ENCODE measurements at regions of chr5 and their contacts with region 1.

Region 1: DNA sequence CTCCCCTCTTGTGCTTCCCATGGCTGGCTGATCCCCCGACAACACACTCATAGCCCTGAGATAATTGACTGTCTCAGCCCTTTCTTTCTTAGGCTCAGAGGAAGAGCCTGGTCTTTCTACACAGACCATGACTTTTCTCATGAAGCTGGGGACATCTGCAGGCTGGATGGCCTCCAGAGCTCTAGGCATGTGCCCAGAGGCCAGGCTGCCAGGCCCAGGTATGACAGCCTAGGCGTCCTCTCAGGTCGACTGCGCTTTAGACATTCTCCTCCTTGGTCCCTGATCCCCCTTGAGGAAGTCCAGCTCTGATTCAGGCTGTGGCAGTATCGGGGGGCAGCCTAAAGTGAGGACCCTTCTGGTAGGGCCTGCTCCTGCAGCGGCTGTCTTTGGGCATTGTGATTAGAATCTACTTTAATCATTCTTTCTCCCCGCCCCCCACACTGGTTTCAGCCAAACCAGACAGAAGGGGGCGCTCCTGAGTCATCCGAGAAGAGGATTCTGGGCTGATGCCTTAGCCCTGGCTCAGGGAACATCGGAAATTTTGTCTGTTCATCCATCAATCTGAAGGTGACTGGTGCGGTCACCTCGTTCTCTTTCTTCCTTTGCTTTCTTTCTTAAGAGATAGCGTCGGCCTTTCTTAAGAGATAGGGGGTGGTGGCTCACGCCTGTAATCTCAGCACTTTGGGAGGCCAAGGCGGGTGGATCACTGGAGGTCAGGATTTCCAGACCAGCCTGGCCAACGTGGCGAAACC is 66.5 kb upstream of the HSPA9 start:
- DNase-seq: peak; percentile 88
- ATAC-seq: peak; percentile 91
- H3K4me3 Mint-ChIP-seq: no peak overlapping the region
- H3K27ac Mint-ChIP-seq: no peak overlapping the region
- H3K4me1 Mint-ChIP-seq: no peaks in the 10 kb centered on the region
- H3K27me3 Mint-ChIP-seq: peaks cover 58% of the 10 kb centered on the region
- CTCF ChIP-seq: peak; percentile 85

Region 2: DNA sequence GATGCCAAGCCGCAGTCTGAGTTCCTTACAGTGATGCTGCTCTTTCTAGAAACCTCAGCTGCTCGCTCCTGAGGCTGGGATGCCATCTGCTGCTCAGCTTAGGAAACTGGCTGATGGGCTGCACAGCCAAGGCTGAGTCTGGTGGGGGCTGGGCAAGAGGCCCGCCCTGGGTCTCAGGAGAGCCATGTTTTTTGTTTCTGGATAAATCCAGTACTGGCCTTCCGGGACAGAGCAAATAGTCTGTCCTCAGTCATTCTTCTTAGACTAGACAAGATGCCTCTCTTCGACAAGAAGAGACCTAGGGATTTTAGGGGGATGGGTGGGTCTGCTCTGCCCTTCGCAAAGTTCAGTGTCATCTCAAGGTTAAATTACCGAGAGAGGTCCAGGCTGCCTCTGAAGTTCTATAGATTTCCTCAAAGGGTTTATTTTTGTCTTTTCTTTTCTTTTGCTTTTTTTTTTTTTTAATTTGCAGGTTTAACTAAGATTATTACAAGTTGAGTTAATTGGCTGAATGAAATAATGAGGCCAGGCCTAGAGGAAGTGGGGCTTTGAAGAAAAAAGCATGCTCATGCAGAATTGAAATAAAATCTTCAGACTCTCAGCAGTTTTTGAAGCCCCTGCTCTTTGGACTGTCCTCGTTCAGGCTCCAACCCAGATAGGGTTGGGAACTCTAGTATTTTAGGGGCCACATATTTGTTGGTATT is 621.2 kb after region 1 on chr5:
- CTCF ChIA-PET with region 1: interaction called, 3 read pairs
- POLR2A ChIA-PET with region 1: no interaction called
- intact Hi-C with region 1: loop called (anchors 5 kb)
- DNase-seq: peak; percentile 86
- ATAC-seq: peak; percentile 100
- H3K4me3 Mint-ChIP-seq: no peak overlapping the region
- H3K27ac Mint-ChIP-seq: no peak overlapping the region
- H3K4me1 Mint-ChIP-seq: peaks cover 10% of the 10 kb centered on the region
- H3K27me3 Mint-ChIP-seq: no peaks in the 10 kb centered on the region
- CTCF ChIP-seq: peak; percentile 79